PC-9 (cell line): ENCODE measurements at regions of chr10 and their contacts with region 1.

Region 1: DNA sequence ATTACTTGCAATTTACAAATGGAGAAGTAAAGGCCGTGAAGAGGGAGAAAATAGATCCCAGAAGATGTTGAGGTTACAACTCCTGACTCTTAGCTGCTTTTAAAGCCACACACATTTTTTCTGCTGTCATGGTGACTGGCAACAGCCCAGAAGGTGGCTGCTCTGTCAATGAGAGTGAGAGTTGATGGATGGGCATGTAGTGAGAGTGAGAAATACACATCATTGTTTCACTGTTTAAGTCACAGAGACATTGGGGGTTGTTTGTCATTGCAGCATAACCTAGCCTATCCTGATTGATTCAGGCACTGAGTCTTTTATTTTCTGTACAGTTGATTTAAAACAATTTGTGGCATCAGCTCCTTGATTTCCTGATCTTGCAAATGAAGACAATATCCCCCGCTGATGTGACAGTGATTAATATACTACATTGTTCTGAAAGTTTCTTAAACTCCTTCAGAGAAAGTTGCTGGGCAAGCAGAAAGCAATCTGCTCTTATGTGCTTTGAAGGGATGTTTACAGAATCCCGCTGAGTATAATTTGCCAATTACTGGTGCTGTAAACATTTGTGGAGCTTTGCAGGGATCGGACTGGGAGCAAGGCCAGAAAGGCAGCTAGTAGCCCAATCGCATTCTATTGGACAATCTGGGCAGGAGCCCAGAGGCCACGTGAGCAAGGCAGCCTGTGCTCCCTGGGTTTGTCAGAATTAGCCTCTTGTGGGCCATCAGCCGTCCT is 229.6 kb downstream of the PRPF18 start:
- DNase-seq: no peak
- H3K4me3 ChIP-seq: no peak overlapping the region
- H3K27ac ChIP-seq: peak overlapping the region; percentile 57
- H3K4me1 ChIP-seq: peaks cover 14% of the 10 kb centered on the region
- H3K27me3 ChIP-seq: no peaks in the 10 kb centered on the region
- CTCF ChIP-seq: no peak

Region 2: GRCh38 chr10:13827076-13827797 is 10.9 kb after region 1 on chr10:
- CTCF ChIA-PET with region 1: interaction called, 15 read pairs
- POLR2A ChIA-PET with region 1: no interaction called
- intact Hi-C with region 1: no loop called
- DNase-seq: no peak
- H3K4me3 ChIP-seq: no peak overlapping the region
- H3K27ac ChIP-seq: no peak overlapping the region
- H3K4me1 ChIP-seq: no peaks in the 10 kb centered on the region
- H3K27me3 ChIP-seq: no peaks in the 10 kb centered on the region
- CTCF ChIP-seq: no peak

Region 3: DNA sequence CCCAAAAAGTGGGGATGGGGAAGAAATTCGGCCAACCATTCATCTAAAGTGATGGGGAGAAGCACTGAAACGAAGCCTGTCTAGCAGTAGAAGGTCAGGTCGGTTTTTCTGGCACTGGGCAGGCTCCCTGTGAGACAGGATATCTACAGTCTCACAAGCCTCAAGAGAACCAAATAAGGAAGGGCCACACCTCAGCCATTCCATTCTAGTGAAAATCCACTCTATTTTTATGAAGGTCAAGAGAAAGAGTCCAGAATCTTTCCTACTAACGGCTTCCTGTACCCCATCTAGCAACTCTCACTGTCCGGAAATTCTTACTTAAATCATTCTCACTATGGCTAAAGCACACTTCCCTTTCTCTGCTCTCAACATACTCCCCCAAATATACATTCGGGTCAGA is 37.5 kb after region 1 on chr10:
- CTCF ChIA-PET with region 1: no interaction called
- POLR2A ChIA-PET with region 1: no interaction called
- intact Hi-C with region 1: no loop called
- DNase-seq: no peak
- H3K4me3 ChIP-seq: no peak overlapping the region
- H3K27ac ChIP-seq: no peak overlapping the region
- H3K4me1 ChIP-seq: no peaks in the 10 kb centered on the region
- H3K27me3 ChIP-seq: no peaks in the 10 kb centered on the region
- CTCF ChIP-seq: no peak

Region 4: GRCh38 chr10:13924040-13924725 is 107.8 kb after region 1 on chr10:
- CTCF ChIA-PET with region 1: no interaction called
- POLR2A ChIA-PET with region 1: no interaction called
- intact Hi-C with region 1: no loop called
- DNase-seq: peak; percentile 37 to 76
- H3K4me3 ChIP-seq: no peak overlapping the region
- H3K27ac ChIP-seq: peak overlapping the region; percentile 67
- H3K4me1 ChIP-seq: peaks cover 18% of the 10 kb centered on the region
- H3K27me3 ChIP-seq: no peaks in the 10 kb centered on the region
- CTCF ChIP-seq: no peak